ENCODE measurements at regions of chr10 and their contacts with region 1.

Region 1: GRCh38 chr10:106795619-106796018 is 368.9 kb downstream of the SORCS1 start:
- DNase-seq: peak in 1 of 2 donors; percentile 30
- ATAC-seq: peak in 6 of 8 donors; percentile 45 to 81 (median 74)
- H3K4me3 ChIP-seq: no peak overlapping the region
- H3K27ac ChIP-seq: no peak overlapping the region
- H3K4me1 ChIP-seq: no peaks in the 10 kb centered on the region
- H3K27me3 ChIP-seq: peaks cover 0 to 8% (median 0%) of the 10 kb centered on the region in 7 donors
- CTCF ChIP-seq: peak in 8 of 9 donors; percentile 18 to 61 (median 52)

Region 2: DNA sequence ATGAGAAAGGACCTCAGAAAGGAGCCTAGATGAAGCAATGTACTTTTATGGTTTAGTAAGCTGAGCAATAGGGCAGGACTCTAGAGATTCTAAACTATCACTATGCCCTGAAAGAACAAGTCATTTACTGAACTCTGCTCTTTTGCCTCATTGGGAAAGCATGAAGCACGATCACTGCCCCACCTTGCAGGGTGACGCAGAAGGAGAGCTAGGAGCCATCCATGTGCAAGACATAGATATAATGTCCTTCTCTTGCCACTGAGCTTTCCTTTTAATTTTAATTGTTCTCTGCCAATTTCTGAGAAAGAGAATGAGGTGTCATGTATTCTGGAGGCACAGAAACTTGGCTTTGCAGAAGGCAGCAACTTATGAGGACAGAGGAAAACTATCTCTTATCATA is 260.6 kb after region 1 on chr10:
- intact Hi-C with region 1: no loop called
- DNase-seq: no peak
- ATAC-seq: peak in 1 of 8 donors; percentile 75
- H3K4me3 ChIP-seq: no peak overlapping the region
- H3K27ac ChIP-seq: no peak overlapping the region
- H3K4me1 ChIP-seq: no peaks in the 10 kb centered on the region
- H3K27me3 ChIP-seq: peaks cover 0 to 6% (median 0%) of the 10 kb centered on the region in 7 donors
- CTCF ChIP-seq: no peak

Region 3: DNA sequence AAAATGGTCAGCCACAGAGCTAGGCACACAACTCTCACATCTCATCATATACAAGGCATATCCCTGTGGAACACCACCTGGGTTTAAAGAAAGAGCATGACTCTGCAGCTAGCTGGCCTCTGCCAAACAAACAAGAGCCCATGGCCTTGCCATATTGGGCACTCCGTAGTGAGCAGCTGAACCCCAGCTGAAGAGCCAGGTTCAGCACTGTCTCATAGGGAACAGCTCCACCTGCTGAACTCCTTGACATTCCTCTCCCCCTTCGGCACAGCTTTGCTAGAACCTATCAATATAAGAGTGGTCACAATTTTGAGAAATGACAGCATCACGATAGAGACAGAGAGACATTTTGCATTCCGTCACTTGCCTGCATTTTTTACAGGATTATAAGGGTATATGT is 348.9 kb after region 1 on chr10:
- intact Hi-C with region 1: loop called in 2 of 10 experiments (anchors 10 kb)
- DNase-seq: no peak
- ATAC-seq: peak in 1 of 8 donors; percentile 59
- H3K4me3 ChIP-seq: no peak overlapping the region
- H3K27ac ChIP-seq: no peak overlapping the region
- H3K4me1 ChIP-seq: no peaks in the 10 kb centered on the region
- H3K27me3 ChIP-seq: no peaks in the 10 kb centered on the region
- CTCF ChIP-seq: peak in 3 of 9 donors; percentile 9 to 30 (median 11)